Heart right ventricle (tissue), 16 donors: ENCODE measurements at regions of chr6 and their contacts with region 1.

Region 1: DNA sequence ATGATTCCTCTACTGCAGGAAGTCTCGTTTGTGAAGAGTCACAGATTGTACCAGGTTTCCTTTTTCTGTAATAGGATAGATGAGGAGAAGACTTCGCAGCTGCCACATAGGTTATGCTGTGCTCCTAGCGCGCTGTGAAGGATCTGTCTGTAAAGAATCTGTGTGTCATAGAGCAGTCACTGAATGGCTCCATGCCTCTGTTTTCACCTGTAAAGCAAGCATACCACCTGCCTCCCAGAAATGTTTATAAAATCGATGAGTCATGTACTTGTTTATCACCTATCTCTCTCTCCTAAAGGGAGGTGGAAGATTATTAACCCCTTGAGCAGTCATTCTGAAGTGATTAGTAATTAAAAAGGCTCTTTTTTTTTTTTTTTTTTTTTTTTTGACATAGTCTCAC is 86.6 kb downstream of the TFAP2B start:
- DNase-seq: no peak
- ATAC-seq: no peak
- H3K4me3 ChIP-seq: no peak overlapping the region
- H3K27ac ChIP-seq: no peak overlapping the region
- H3K4me1 ChIP-seq: no peaks in the 10 kb centered on the region
- H3K27me3 ChIP-seq: no peaks in the 10 kb centered on the region
- CTCF ChIP-seq: no peak

Region 2: DNA sequence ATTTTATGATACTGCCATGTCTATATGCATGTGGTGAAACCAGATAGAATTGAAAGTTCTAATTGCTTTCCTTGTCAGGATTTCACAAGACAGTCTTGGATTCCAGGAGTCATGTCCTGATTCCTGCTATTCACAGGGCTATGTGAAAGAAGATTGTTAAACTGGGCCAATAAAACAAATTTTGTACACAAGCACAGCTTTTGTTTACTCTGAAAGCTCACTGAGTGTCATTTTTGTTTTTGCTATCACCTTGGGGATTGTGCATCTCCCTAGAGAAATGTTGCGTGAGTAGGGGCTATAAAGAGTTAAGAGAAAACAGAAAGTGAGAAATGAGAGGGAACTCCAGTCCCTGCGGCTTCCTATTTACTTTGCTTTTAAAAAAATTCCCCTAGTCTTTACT is 554.7 kb after region 1 on chr6:
- intact Hi-C with region 1: loop called in 1 of 10 experiments (anchors 10 kb)
- DNase-seq: no peak
- ATAC-seq: no peak
- H3K4me3 ChIP-seq: no peak overlapping the region
- H3K27ac ChIP-seq: no peak overlapping the region
- H3K4me1 ChIP-seq: no peaks in the 10 kb centered on the region
- H3K27me3 ChIP-seq: no peaks in the 10 kb centered on the region
- CTCF ChIP-seq: no peak